CD4-positive, alpha-beta memory T cell (primary cell): ENCODE measurements at regions of chr19 and their contacts with region 1.

Region 1: GRCh38 chr19:1295169-1296012 is 9.7 kb downstream of the EFNA2 start:
- DNase-seq: no peak
- H3K4me3 ChIP-seq: no peak overlapping the region
- H3K4me3 Mint-ChIP-seq: peak overlapping the region in 1 of 8 donors; percentile 17
- H3K27ac ChIP-seq: no peak overlapping the region
- H3K27ac Mint-ChIP-seq: no peak overlapping the region
- H3K4me1 ChIP-seq: peaks cover 6% of the 10 kb centered on the region
- H3K4me1 Mint-ChIP-seq: no peaks in the 10 kb centered on the region
- H3K27me3 ChIP-seq: peaks cover 6% of the 10 kb centered on the region
- H3K27me3 Mint-ChIP-seq: peaks cover 12 to 13% of the 10 kb centered on the region in 2 donors

Region 2: GRCh38 chr19:1001538-1002166 is 293.7 kb before region 1 on chr19:
- CTCF ChIA-PET with region 1: no interaction called
- POLR2A ChIA-PET with region 1: no interaction called
- intact Hi-C with region 1: no loop called
- DNase-seq: peak; percentile 60 to 71 (median 61)
- H3K4me3 ChIP-seq: no peak overlapping the region
- H3K4me3 Mint-ChIP-seq: no peak overlapping the region
- H3K27ac ChIP-seq: no peak overlapping the region
- H3K27ac Mint-ChIP-seq: peak overlapping the region in 1 of 7 donors; percentile 21
- H3K4me1 ChIP-seq: peaks cover 15% of the 10 kb centered on the region
- H3K4me1 Mint-ChIP-seq: peaks cover 2 to 18% (median 10%) of the 10 kb centered on the region in 4 donors
- H3K27me3 ChIP-seq: peaks cover 26% of the 10 kb centered on the region
- H3K27me3 Mint-ChIP-seq: peaks cover 17 to 19% of the 10 kb centered on the region in 2 donors

Region 3: GRCh38 chr19:1343041-1343440 is 47.6 kb after region 1 on chr19:
- CTCF ChIA-PET with region 1: no interaction called
- POLR2A ChIA-PET with region 1: no interaction called
- intact Hi-C with region 1: loop called (anchors 10 kb)
- DNase-seq: no peak
- H3K4me3 ChIP-seq: no peak overlapping the region
- H3K4me3 Mint-ChIP-seq: no peak overlapping the region
- H3K27ac ChIP-seq: no peak overlapping the region
- H3K27ac Mint-ChIP-seq: no peak overlapping the region
- H3K4me1 ChIP-seq: no peaks in the 10 kb centered on the region
- H3K4me1 Mint-ChIP-seq: peaks cover 0 to 9% (median 4%) of the 10 kb centered on the region in 4 donors
- H3K27me3 ChIP-seq: no peaks in the 10 kb centered on the region
- H3K27me3 Mint-ChIP-seq: peaks cover 0 to 1% of the 10 kb centered on the region in 2 donors